IMR-90 (cell line): ENCODE measurements at regions of chr17 and their contacts with region 1.

Region 1: DNA sequence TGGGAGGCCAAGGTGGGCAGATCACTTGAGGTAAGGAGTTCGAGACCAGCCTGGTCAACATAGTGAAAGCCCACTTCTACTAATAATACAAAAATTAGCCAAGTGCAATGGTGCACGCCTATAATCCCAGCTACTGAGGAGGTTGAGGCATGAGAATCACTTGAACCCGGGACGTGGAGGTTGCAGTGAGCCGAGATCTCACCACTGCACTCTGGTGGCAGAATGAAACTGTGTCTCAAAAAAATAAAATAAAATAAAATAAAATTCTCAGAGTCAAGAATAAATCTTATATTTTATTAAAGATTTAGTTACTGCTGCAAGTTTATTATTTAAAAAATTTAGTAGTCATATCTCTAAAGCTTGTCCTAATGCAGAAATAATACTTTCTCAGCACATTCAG is 29.7 kb downstream of the ARL4D start:
- DNase-seq: no peak
- ATAC-seq: no peak
- H3K4me3 ChIP-seq: no peak overlapping the region
- H3K27ac ChIP-seq: no peak overlapping the region
- H3K4me1 ChIP-seq: peaks cover 7% of the 10 kb centered on the region
- H3K27me3 ChIP-seq: peaks cover 7% of the 10 kb centered on the region
- CTCF ChIP-seq: peak; percentile 27
- POLR2A ChIP-seq: no peak
- RAD21 ChIP-seq: peak; percentile 29; the same call in 1 of the 2 replicates

Region 2: DNA sequence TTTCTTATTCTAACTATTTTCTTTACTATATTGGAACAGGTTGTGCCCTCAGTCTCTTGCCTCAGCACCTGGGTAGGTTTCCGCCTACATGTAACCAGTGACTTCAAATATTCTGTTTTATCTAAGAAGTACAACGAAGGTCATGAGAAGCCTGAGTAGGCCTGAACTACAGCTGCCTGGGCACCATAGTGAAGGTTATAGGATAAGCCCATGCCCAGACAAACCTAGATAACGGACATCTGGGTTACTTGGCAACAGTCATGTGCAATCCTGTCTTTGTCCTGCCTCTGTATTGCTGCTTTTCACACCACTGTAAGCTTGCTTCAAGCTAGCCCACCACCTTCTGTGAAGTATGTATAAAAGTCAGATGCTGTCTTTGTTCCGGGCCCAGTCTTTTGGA is 55.2 kb before region 1 on chr17:
- CTCF ChIA-PET with region 1: no interaction called
- POLR2A ChIA-PET with region 1: no interaction called
- dilution Hi-C with region 1: no loop called
- in situ Hi-C with region 1: no loop called
- intact Hi-C with region 1: no loop called
- DNase-seq: no peak
- ATAC-seq: no peak
- H3K4me3 ChIP-seq: no peak overlapping the region
- H3K27ac ChIP-seq: no peak overlapping the region
- H3K4me1 ChIP-seq: peaks cover 5% of the 10 kb centered on the region
- H3K27me3 ChIP-seq: no peaks in the 10 kb centered on the region
- CTCF ChIP-seq: no peak
- POLR2A ChIP-seq: no peak
- RAD21 ChIP-seq: no peak

Region 3: GRCh38 chr17:43393944-43394482 is 34.5 kb before region 1 on chr17:
- CTCF ChIA-PET with region 1: interaction called, 4 read pairs
- POLR2A ChIA-PET with region 1: no interaction called
- dilution Hi-C with region 1: no loop called
- in situ Hi-C with region 1: no loop called
- intact Hi-C with region 1: loop called (anchors 1 kb)
- DNase-seq: peak; percentile 83
- ATAC-seq: peak; percentile 47
- H3K4me3 ChIP-seq: no peak overlapping the region
- H3K27ac ChIP-seq: peak overlapping the region; percentile 52
- H3K4me1 ChIP-seq: peaks cover 5% of the 10 kb centered on the region
- H3K27me3 ChIP-seq: no peaks in the 10 kb centered on the region
- CTCF ChIP-seq: peak; percentile 97
- POLR2A ChIP-seq: 0 out of 2 replicates have a peak, but pooled peaks have one; percentile 47
- RAD21 ChIP-seq: peak; percentile 99

Region 4: DNA sequence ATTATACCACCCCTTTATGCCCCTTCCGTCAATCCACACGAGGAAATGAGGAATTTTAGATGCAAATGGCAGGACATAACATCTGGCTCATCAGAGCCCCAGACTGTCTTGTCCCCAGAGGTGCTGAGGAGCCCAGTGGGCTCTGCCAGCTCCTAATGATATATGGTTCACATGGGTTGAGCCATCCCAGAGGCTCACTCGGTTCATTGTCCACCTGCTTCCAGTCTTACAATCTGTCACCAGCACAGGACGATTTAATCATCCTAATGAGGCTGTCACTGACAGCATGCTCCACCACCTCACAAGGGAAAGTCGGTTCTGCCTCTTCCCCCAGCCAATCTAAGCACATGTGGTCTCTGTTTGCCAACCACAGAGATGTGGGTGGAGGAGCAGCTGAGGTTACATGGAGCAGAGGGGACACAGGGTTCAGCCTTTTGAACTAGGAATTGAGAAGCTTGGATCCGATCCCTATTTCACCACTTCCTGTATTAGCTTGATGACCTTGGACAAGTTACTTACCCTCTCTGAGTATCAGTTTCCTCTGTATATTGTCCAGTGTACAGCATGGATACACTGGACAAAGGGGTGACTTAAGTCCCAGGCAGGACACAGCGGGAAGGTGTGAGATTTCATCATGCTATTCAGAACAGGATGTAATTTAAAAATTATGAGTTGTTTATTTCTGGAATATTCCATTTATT is 28.3 kb after region 1 on chr17:
- CTCF ChIA-PET with region 1: no interaction called
- POLR2A ChIA-PET with region 1: no interaction called
- dilution Hi-C with region 1: no loop called
- in situ Hi-C with region 1: no loop called
- intact Hi-C with region 1: no loop called
- DNase-seq: peak; percentile 44
- ATAC-seq: peak; percentile 72
- H3K4me3 ChIP-seq: no peak overlapping the region
- H3K27ac ChIP-seq: no peak overlapping the region
- H3K4me1 ChIP-seq: peaks cover 12% of the 10 kb centered on the region
- H3K27me3 ChIP-seq: no peaks in the 10 kb centered on the region; the same call in 1 of the 2 replicates
- CTCF ChIP-seq: no peak
- POLR2A ChIP-seq: no peak
- RAD21 ChIP-seq: no peak

Region 5: GRCh38 chr17:43477832-43478634 is 49.5 kb after region 1 on chr17:
- CTCF ChIA-PET with region 1: interaction called, 3 read pairs
- POLR2A ChIA-PET with region 1: no interaction called
- dilution Hi-C with region 1: no loop called
- in situ Hi-C with region 1: no loop called
- intact Hi-C with region 1: loop called (anchors 5 kb)
- DNase-seq: no peak
- ATAC-seq: no peak
- H3K4me3 ChIP-seq: no peak overlapping the region
- H3K27ac ChIP-seq: no peak overlapping the region
- H3K4me1 ChIP-seq: no peaks in the 10 kb centered on the region
- H3K27me3 ChIP-seq: no peaks in the 10 kb centered on the region
- CTCF ChIP-seq: no peak
- POLR2A ChIP-seq: no peak
- RAD21 ChIP-seq: no peak